Activated CD4-positive, alpha-beta T cell treated with anti-CD3 and anti-CD28 coated beads for 36 hours (primary cell): ENCODE measurements at regions of chr6 and their contacts with region 1.

Region 1: DNA sequence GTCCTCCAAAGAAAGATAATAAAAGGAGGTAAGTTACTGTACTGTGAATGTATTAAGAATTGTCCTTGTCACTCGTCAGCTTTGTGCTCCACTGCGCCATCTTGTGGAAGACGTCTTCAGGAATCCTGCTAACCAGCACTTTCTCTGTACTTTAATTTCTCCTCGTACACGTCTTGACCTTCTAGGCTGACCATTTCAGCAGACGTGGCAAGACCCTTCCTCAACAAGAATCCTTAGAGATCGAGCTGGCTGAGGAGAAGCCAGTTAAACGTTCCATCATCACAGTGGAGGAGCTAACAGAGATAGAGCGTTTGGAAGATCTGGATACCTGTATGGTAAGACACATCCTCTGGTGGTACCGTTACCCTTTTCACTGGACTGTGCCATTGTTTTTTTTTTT is 95.5 kb upstream of the SCGN start:
- DNase-seq: peak; percentile 90
- ATAC-seq: peak; percentile 66
- H3K4me3 Mint-ChIP-seq: no peak overlapping the region
- H3K27ac Mint-ChIP-seq: no peak overlapping the region
- H3K4me1 Mint-ChIP-seq: peaks cover 2% of the 10 kb centered on the region
- H3K27me3 Mint-ChIP-seq: no peaks in the 10 kb centered on the region

Region 2: GRCh38 chr6:25542984-25543910 is 13.3 kb before region 1 on chr6:
- CTCF ChIA-PET with region 1: interaction called, 15 read pairs
- POLR2A ChIA-PET with region 1: no interaction called
- intact Hi-C with region 1: no loop called
- DNase-seq: no peak
- ATAC-seq: no peak
- H3K4me3 Mint-ChIP-seq: no peak overlapping the region
- H3K27ac Mint-ChIP-seq: no peak overlapping the region
- H3K4me1 Mint-ChIP-seq: no peaks in the 10 kb centered on the region
- H3K27me3 Mint-ChIP-seq: no peaks in the 10 kb centered on the region

Region 3: DNA sequence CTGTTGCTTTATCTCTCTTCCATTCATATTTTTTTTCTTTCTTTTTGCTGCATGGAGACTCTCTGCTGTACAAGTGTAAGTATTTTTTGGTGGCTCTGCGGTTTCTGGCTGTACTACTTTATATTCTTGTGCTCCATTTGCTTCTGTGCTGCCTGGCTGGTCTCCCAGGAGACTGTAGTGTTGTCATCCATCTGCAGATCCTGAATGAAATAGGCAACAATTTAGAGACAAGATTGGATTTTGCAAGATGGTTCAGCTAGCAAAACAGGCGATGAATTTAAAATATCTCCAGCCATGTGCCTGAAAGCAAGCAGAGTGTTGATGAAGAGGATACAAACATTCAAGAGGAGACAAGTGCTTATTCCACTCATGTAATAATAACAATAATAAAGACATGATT is 20.4 kb after region 1 on chr6:
- CTCF ChIA-PET with region 1: interaction called, 7 read pairs
- POLR2A ChIA-PET with region 1: interaction called, 12 read pairs
- intact Hi-C with region 1: no loop called
- DNase-seq: no peak
- ATAC-seq: no peak
- H3K4me3 Mint-ChIP-seq: no peak overlapping the region
- H3K27ac Mint-ChIP-seq: no peak overlapping the region
- H3K4me1 Mint-ChIP-seq: peaks cover 9% of the 10 kb centered on the region
- H3K27me3 Mint-ChIP-seq: no peaks in the 10 kb centered on the region

Region 4: GRCh38 chr6:25601800-25602673 is 45.5 kb after region 1 on chr6:
- CTCF ChIA-PET with region 1: interaction called, 8 read pairs
- POLR2A ChIA-PET with region 1: no interaction called
- intact Hi-C with region 1: loop called (anchors 1 to 2 kb)
- DNase-seq: no peak
- ATAC-seq: no peak
- H3K4me3 Mint-ChIP-seq: no peak overlapping the region
- H3K27ac Mint-ChIP-seq: no peak overlapping the region
- H3K4me1 Mint-ChIP-seq: no peaks in the 10 kb centered on the region
- H3K27me3 Mint-ChIP-seq: no peaks in the 10 kb centered on the region